HepG2 (cell line): ENCODE measurements at regions of chr20 and their contacts with region 1.

Region 1: DNA sequence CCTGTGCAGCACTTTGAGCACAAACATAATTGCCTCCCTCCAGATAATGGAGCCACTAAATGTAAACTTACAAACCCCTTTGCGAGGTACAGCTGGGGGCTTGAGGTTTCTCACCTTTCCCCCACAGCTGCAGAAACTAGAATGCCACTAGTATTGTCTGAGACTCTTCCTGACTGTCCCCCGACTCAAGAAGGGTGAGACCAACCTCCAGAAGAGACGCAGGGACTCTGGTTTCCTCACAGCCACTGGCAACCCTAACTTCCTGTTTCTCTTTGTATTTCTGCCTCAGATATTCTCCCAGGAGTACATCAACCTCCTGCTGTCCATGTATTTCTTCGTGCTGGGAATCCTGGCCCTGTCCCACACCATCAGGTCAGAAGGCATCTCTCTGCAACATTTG is 23.6 kb downstream of the HM13 start:
- DNase-seq: no peak
- ATAC-seq: no peak
- H3K4me3 ChIP-seq: no peak overlapping the region
- H3K27ac ChIP-seq: no peak overlapping the region
- H3K4me1 ChIP-seq: no peaks in the 10 kb centered on the region
- H3K27me3 ChIP-seq: no peaks in the 10 kb centered on the region
- CTCF ChIP-seq: no peak
- EP300 ChIP-seq: no peak
- POLR2A ChIP-seq: no peak
- RAD21 ChIP-seq: no peak

Region 2: DNA sequence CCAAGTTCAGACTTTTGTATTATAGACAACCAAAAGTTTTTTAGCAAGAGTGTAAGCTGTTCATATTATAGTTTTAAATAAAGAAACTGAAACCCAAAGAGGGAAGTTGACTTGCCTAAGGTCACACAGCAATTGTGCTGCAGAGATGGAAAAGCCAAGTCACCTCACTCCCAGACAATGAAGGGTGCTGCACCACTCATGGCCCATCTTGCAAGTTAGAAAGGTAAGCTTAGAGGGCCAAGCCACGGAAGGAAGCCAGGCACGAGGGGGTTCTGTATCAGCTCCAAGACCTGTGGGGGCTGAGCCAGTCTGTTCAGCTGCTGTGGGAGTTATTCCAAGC is 63.8 kb before region 1 on chr20:
- CTCF ChIA-PET with region 1: no interaction called
- POLR2A ChIA-PET with region 1: no interaction called
- in situ Hi-C with region 1: loop called (anchors 10 kb)
- intact Hi-C with region 1: no loop called
- DNase-seq: no peak
- ATAC-seq: no peak
- H3K4me3 ChIP-seq: no peak overlapping the region
- H3K27ac ChIP-seq: no peak overlapping the region
- H3K4me1 ChIP-seq: no peaks in the 10 kb centered on the region
- H3K27me3 ChIP-seq: peaks cover 7 to 49% of the 10 kb centered on the region in 2 experiments; a peak in 3 of 5 replicates
- CTCF ChIP-seq: no peak
- EP300 ChIP-seq: no peak
- POLR2A ChIP-seq: no peak
- RAD21 ChIP-seq: no peak